CD4-positive, alpha-beta T cell (primary cell): ENCODE measurements at regions of chr9 and their contacts with region 1.

Region 1: DNA sequence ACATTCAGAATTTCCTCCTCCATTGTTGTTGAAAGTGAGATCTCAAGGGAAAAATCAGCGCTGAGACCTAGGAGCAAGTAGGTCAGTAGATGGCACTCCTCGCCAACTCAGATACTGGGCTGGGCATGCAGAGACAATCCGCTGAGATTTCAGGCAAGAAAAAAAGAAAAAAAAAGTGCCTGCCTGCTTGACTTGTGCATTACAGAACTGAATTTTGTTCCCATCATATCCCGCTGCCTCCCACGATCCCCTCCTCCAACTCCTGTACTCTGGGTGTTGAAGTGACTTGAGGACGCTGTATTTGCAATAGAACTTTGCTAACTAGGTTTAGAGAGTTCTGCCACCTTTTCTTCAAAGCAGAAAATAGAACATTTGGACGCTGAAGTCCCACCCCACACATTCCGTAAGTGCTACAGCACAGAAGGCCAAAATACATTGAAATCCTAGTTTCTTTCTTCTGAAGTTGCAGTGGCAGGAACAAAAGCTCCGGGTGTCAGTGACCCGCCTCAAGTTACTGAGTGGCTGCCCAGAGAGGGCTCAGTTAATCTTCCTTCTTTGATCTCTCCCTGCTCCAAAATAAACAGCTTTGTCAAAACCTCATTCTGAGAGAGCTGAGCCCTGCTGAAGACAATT is 265.8 kb downstream of the MLLT3 start:
- DNase-seq: peak; percentile 35 to 76 (median 47)
- ATAC-seq: peak; percentile 86
- H3K4me3 ChIP-seq: no peak overlapping the region
- H3K4me3 Mint-ChIP-seq: no peak overlapping the region
- H3K27ac ChIP-seq: no peak overlapping the region
- H3K27ac Mint-ChIP-seq: peak overlapping the region; percentile 45
- H3K4me1 ChIP-seq: peaks cover 5% of the 10 kb centered on the region
- H3K4me1 Mint-ChIP-seq: peaks cover 42% of the 10 kb centered on the region
- H3K27me3 ChIP-seq: no peaks in the 10 kb centered on the region
- H3K27me3 Mint-ChIP-seq: no peaks in the 10 kb centered on the region
- CTCF ChIP-seq: peak; percentile 60

Region 2: GRCh38 chr9:19925817-19926503 is 430.6 kb before region 1 on chr9:
- CTCF ChIA-PET with region 1: no interaction called
- POLR2A ChIA-PET with region 1: no interaction called
- intact Hi-C with region 1: loop called (anchors 5 to 10 kb)
- DNase-seq: peak; percentile 62 to 89 (median 72)
- ATAC-seq: peak; percentile 100
- H3K4me3 ChIP-seq: peak overlapping the region; percentile 21
- H3K4me3 Mint-ChIP-seq: peak overlapping the region; percentile 47
- H3K27ac ChIP-seq: no peak overlapping the region
- H3K27ac Mint-ChIP-seq: no peak overlapping the region
- H3K4me1 ChIP-seq: peaks cover 7% of the 10 kb centered on the region
- H3K4me1 Mint-ChIP-seq: peaks cover 5% of the 10 kb centered on the region
- H3K27me3 ChIP-seq: no peaks in the 10 kb centered on the region
- H3K27me3 Mint-ChIP-seq: peaks cover 15% of the 10 kb centered on the region
- CTCF ChIP-seq: peak; percentile 94

Region 3: GRCh38 chr9:20040991-20041765 is 315.3 kb before region 1 on chr9:
- CTCF ChIA-PET with region 1: no interaction called
- POLR2A ChIA-PET with region 1: no interaction called
- intact Hi-C with region 1: no loop called
- DNase-seq: no peak
- ATAC-seq: no peak
- H3K4me3 ChIP-seq: no peak overlapping the region
- H3K4me3 Mint-ChIP-seq: no peak overlapping the region
- H3K27ac ChIP-seq: no peak overlapping the region
- H3K27ac Mint-ChIP-seq: no peak overlapping the region
- H3K4me1 ChIP-seq: peaks cover 12% of the 10 kb centered on the region
- H3K4me1 Mint-ChIP-seq: peaks cover 24% of the 10 kb centered on the region
- H3K27me3 ChIP-seq: no peaks in the 10 kb centered on the region
- H3K27me3 Mint-ChIP-seq: no peaks in the 10 kb centered on the region
- CTCF ChIP-seq: no peak

Region 4: GRCh38 chr9:20117986-20118385 is 238.5 kb before region 1 on chr9:
- CTCF ChIA-PET with region 1: no interaction called
- POLR2A ChIA-PET with region 1: no interaction called
- intact Hi-C with region 1: no loop called
- DNase-seq: no peak
- ATAC-seq: no peak
- H3K4me3 ChIP-seq: no peak overlapping the region
- H3K4me3 Mint-ChIP-seq: no peak overlapping the region
- H3K27ac ChIP-seq: no peak overlapping the region
- H3K27ac Mint-ChIP-seq: no peak overlapping the region
- H3K4me1 ChIP-seq: no peaks in the 10 kb centered on the region
- H3K4me1 Mint-ChIP-seq: no peaks in the 10 kb centered on the region
- H3K27me3 ChIP-seq: no peaks in the 10 kb centered on the region
- H3K27me3 Mint-ChIP-seq: no peaks in the 10 kb centered on the region
- CTCF ChIP-seq: no peak

Region 5: DNA sequence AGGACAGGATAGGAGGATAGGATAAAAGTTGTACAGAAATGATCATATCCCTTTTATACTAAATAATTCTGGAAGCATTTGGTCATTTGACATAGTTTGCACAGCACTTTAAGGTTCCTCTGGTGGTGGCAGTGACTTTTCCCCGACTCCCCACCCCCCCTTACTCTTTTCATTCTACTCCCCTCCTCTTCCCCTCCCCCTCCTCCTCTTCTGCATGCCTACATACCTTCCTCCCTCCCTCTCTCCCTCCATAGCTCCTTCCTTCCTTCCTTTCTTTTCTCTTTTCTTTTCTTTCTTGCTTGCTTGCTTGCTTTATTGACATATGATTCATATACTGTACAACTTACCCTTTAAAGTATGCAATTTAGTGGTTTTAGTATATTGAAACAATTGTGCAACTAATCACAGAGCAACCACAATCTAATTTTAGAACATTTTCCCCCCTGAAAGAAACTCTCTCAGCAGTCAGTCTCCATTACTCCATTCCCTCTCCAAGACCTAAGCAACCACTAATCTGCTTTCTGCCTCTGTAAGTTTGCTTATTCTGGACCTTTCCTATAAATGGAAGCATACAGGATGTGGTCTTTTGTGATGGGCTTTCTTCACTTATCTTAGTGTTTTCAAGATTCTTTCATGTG is 515.9 kb after region 1 on chr9:
- CTCF ChIA-PET with region 1: no interaction called
- POLR2A ChIA-PET with region 1: no interaction called
- intact Hi-C with region 1: loop called in 1 of 2 experiments (anchors 10 kb)
- DNase-seq: no peak
- ATAC-seq: no peak
- H3K4me3 ChIP-seq: no peak overlapping the region
- H3K4me3 Mint-ChIP-seq: no peak overlapping the region
- H3K27ac ChIP-seq: no peak overlapping the region
- H3K27ac Mint-ChIP-seq: no peak overlapping the region
- H3K4me1 ChIP-seq: no peaks in the 10 kb centered on the region
- H3K4me1 Mint-ChIP-seq: peaks cover 7% of the 10 kb centered on the region
- H3K27me3 ChIP-seq: no peaks in the 10 kb centered on the region
- H3K27me3 Mint-ChIP-seq: no peaks in the 10 kb centered on the region
- CTCF ChIP-seq: no peak

Region 6: DNA sequence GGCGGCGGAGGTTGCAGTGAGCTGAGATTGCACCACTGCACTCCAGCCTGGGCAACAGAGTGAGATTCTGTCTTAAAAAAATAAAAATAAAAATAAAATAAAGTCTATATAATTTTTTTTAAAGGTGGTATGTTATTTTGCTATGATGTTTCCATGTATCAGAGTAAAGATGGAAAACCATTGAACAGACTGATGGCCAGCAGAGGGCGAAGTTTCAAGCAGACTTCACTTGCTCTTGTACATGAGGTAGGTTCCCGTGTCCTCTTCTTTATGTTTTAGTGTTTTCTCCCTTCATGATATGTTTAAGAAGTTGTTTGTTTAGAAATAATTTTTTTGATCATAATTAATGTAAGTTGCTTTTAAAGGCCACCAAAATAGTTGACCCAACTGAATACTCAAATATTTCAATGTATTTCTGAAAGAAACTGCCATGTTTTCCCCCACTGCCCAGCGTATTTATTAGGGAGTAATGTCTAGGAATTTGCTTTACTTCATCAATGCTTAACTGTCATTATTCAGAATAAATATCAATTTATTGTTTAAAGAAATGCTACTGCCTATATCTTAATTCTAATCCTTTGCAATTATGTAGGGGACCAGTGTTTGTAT is 528.6 kb after region 1 on chr9:
- CTCF ChIA-PET with region 1: no interaction called
- POLR2A ChIA-PET with region 1: no interaction called
- intact Hi-C with region 1: loop called in 1 of 2 experiments (anchors 5 kb)
- DNase-seq: peak; percentile 30 to 74 (median 52)
- ATAC-seq: peak; percentile 56
- H3K4me3 ChIP-seq: no peak overlapping the region
- H3K4me3 Mint-ChIP-seq: no peak overlapping the region
- H3K27ac ChIP-seq: no peak overlapping the region
- H3K27ac Mint-ChIP-seq: no peak overlapping the region
- H3K4me1 ChIP-seq: no peaks in the 10 kb centered on the region
- H3K4me1 Mint-ChIP-seq: no peaks in the 10 kb centered on the region
- H3K27me3 ChIP-seq: no peaks in the 10 kb centered on the region
- H3K27me3 Mint-ChIP-seq: no peaks in the 10 kb centered on the region
- CTCF ChIP-seq: peak; percentile 79

Region 7: DNA sequence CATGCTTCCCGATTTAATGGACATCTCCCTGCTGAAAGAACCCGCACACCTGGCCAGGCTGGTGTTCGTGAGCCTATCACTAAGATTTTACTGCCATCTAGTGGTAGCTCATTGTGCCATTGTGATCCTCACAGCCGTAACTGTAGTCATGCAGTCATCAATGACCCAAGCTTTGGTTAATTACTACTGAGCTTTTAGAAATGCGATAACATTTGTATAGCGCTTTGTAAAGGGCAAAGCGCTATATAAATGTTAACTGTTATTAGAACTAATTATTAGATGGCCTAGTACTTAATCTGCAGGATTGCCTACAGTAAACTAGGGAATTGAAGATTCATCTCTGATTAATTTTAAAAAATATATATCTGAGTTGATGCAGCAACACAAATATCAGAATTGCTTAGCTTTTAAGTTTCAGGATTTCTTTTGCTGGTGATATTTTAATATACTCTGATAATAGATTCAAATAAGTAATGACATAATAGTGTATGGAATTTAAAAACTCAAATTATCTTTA is 584.7 kb after region 1 on chr9:
- CTCF ChIA-PET with region 1: no interaction called
- POLR2A ChIA-PET with region 1: no interaction called
- intact Hi-C with region 1: loop called (anchors 1 to 2 kb)
- DNase-seq: peak; percentile 16 to 83 (median 37)
- ATAC-seq: peak; percentile 93
- H3K4me3 ChIP-seq: no peak overlapping the region
- H3K4me3 Mint-ChIP-seq: no peak overlapping the region
- H3K27ac ChIP-seq: no peak overlapping the region
- H3K27ac Mint-ChIP-seq: no peak overlapping the region
- H3K4me1 ChIP-seq: peaks cover 2% of the 10 kb centered on the region
- H3K4me1 Mint-ChIP-seq: peaks cover 4% of the 10 kb centered on the region
- H3K27me3 ChIP-seq: no peaks in the 10 kb centered on the region
- H3K27me3 Mint-ChIP-seq: no peaks in the 10 kb centered on the region
- CTCF ChIP-seq: peak; percentile 91

Region 8: DNA sequence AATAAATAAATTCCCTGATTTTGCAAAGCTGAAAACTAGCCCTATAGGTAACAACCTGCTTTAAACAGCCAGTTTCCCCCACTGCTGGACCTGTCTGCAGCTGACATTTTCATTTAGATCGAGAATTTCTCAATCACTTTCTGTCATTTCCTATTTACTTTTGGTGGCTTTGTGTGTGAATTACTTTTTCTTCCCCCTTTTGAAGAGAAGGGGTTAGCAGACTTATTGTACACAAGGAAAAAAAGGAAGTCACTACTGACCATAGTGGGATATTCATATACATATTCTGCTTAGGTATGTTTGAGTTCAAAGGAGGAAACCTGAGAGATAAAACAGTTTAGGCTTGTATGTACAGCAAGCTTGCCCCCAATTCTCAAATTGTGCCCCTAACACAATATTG is 748.3 kb after region 1 on chr9:
- CTCF ChIA-PET with region 1: no interaction called
- POLR2A ChIA-PET with region 1: no interaction called
- intact Hi-C with region 1: loop called in 1 of 2 experiments (anchors 5 kb)
- DNase-seq: no peak
- ATAC-seq: no peak
- H3K4me3 ChIP-seq: no peak overlapping the region
- H3K4me3 Mint-ChIP-seq: no peak overlapping the region
- H3K27ac ChIP-seq: no peak overlapping the region
- H3K27ac Mint-ChIP-seq: no peak overlapping the region
- H3K4me1 ChIP-seq: no peaks in the 10 kb centered on the region
- H3K4me1 Mint-ChIP-seq: no peaks in the 10 kb centered on the region
- H3K27me3 ChIP-seq: no peaks in the 10 kb centered on the region
- H3K27me3 Mint-ChIP-seq: no peaks in the 10 kb centered on the region
- CTCF ChIP-seq: no peak

Region 9: DNA sequence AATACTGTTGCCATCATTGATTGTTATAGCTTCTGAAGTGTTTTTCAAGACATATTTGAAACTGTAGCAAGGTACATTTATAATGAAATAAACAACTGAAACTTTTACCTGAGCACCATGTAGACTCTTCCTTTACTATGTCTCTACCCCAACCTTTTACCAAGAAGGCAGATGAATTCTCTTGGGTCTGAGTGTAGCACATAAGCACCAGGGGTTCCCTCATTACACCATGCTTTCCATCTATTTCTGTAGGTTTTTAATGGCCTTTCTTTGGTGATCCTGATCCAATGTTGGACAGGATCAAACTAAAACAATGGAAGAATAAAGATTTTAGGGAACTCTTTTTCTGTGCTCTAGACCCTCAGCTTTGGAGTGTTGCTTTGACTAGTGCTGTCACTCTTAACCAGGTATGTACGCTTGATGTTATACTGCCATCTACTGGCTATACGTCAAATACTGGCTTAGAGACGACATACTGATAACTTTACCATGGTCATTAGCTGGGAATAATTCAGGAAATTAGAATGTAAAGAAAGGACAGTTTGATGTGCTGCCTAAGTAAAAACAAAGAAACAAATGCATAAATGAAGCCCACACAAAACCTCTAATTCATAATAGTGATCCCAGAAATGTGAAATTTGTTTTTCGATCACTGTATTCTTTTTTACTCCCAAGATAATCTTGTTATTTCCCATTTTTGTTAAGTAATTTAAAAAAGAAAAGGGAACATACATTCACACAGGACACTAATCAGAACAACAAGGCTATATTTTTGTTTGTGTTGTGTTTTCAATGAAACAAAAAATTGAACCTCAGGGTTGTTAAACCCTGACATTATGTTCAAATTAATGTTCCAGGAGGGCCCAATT is 754.4 kb after region 1 on chr9:
- CTCF ChIA-PET with region 1: no interaction called
- POLR2A ChIA-PET with region 1: no interaction called
- intact Hi-C with region 1: loop called (anchors 1 to 5 kb)
- DNase-seq: peak in 5 of 14 experiments; percentile 10 to 84 (median 78)
- ATAC-seq: peak; percentile 89
- H3K4me3 ChIP-seq: no peak overlapping the region
- H3K4me3 Mint-ChIP-seq: no peak overlapping the region
- H3K27ac ChIP-seq: no peak overlapping the region
- H3K27ac Mint-ChIP-seq: no peak overlapping the region
- H3K4me1 ChIP-seq: no peaks in the 10 kb centered on the region
- H3K4me1 Mint-ChIP-seq: no peaks in the 10 kb centered on the region
- H3K27me3 ChIP-seq: no peaks in the 10 kb centered on the region
- H3K27me3 Mint-ChIP-seq: peaks cover 6% of the 10 kb centered on the region
- CTCF ChIP-seq: peak; percentile 92